OCI-LY7 (cell line): ENCODE measurements at regions of chr11 and their contacts with region 1.

Region 1: GRCh38 chr11:119205574-119206510 is at the start of gene CBL:
- DNase-seq: peak; percentile 92
- H3K4me3 ChIP-seq: peak within 1 kb of the TSS; percentile 100
- H3K27ac ChIP-seq: peak within 1 kb of the TSS; percentile 78
- H3K4me1 ChIP-seq: peaks cover 31% of the 10 kb centered on the region
- CTCF ChIP-seq: peak; percentile 89
- total RNA-seq, gene CBL: 19.1 and 19.2 TPM in 2 replicates

Region 2: GRCh38 chr11:118997627-118998387 is 208.0 kb before region 1 on chr11 and contains the start of gene CENATAC:
- CTCF ChIA-PET with region 1: no interaction called
- POLR2A ChIA-PET with region 1: no interaction called
- intact Hi-C with region 1: no loop called
- DNase-seq: peak; percentile 96
- H3K4me3 ChIP-seq: peak within 1 kb of the TSS; percentile 88
- H3K27ac ChIP-seq: peak within 1 kb of the TSS; percentile 50
- H3K4me1 ChIP-seq: peaks cover 19% of the 10 kb centered on the region
- CTCF ChIP-seq: 0 out of 2 replicates have a peak, but pooled peaks have one; percentile 25
- total RNA-seq, gene CENATAC: 47.7 and 49.7 TPM in 2 replicates

Region 3: GRCh38 chr11:119284344-119285157 is 78.7 kb after region 1 on chr11:
- CTCF ChIA-PET with region 1: interaction called, 3 read pairs
- POLR2A ChIA-PET with region 1: interaction called, 7 read pairs
- intact Hi-C with region 1: loop called (anchors 1 kb)
- DNase-seq: peak; percentile 74
- H3K4me3 ChIP-seq: no peak overlapping the region
- H3K27ac ChIP-seq: no peak overlapping the region
- H3K4me1 ChIP-seq: peaks cover 8% of the 10 kb centered on the region
- CTCF ChIP-seq: peak; percentile 94

Region 4: GRCh38 chr11:119509969-119510401 is 304.1 kb after region 1 on chr11:
- CTCF ChIA-PET with region 1: no interaction called
- POLR2A ChIA-PET with region 1: no interaction called
- intact Hi-C with region 1: no loop called
- DNase-seq: peak; percentile 36
- H3K4me3 ChIP-seq: no peak overlapping the region
- H3K27ac ChIP-seq: no peak overlapping the region
- H3K4me1 ChIP-seq: no peaks in the 10 kb centered on the region
- CTCF ChIP-seq: no peak

Region 5: DNA sequence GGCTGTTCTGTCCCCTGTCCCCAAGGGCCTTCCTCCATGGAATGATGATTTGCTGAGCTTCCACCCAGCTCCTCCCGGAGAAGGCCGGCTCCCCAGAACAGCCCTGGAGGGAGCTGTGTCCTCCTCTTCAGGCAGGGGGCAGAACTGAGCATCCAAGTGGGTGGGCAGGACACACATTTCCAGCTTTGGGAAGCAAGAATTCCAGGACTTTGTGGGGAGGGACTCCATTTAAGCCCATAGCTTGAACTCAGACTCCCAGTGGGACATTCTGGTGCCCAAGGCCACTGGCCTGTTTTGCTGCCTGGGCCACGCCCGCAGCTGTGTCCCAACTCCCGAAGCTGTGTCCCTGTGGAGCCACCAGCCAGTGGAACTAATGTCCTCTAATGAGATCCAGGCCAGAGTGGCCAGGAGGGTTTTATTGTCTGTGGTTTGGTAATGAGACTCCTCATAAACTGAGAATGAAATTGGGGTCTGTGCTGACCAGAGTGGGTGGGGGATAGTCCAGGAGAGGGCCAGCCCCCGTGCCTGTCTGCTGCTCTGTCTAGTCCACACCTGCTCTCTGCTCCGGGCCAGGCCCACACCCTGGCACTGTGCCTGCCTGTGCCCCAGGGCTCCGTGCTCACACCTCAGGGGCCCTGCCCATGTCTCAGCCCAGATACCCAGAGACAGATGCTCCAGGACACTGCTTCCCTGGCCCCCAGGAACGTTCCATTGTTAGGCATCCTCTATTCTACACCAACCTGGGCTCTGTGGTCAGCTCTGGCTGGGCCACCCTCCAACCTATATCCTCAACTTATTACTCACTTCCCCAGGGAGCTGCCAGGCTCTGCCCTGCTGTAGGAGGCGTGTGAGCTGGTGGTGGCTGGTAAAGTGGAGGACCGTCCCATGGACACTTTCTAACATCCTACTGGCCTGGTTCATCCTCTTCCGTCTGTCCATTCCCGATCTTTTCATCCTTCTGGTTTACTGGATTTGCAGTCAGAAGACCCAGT is 515.6 kb after region 1 on chr11:
- CTCF ChIA-PET with region 1: no interaction called
- POLR2A ChIA-PET with region 1: no interaction called
- intact Hi-C with region 1: no loop called
- DNase-seq: no peak
- H3K4me3 ChIP-seq: no peak overlapping the region
- H3K27ac ChIP-seq: no peak overlapping the region
- H3K4me1 ChIP-seq: peaks cover 8% of the 10 kb centered on the region
- CTCF ChIP-seq: peak; percentile 62